PC-3 (cell line): ENCODE measurements at regions of chr5 and their contacts with region 1.

Region 1: GRCh38 chr5:94968507-94969095 is 316.3 kb downstream of the MCTP1 start:
- DNase-seq: peak; percentile 79
- ATAC-seq: peak; percentile 64
- H3K4me3 ChIP-seq: no peak overlapping the region
- H3K27ac ChIP-seq: no peak overlapping the region
- H3K4me1 ChIP-seq: no peaks in the 10 kb centered on the region; the same call in 1 of the 2 replicates
- H3K27me3 ChIP-seq: no peaks in the 10 kb centered on the region
- CTCF ChIP-seq: peak; percentile 71

Region 2: GRCh38 chr5:95081500-95081960 is 112.9 kb after region 1 on chr5:
- CTCF ChIA-PET with region 1: no interaction called
- POLR2A ChIA-PET with region 1: no interaction called
- intact Hi-C with region 1: loop called (anchors 2 kb)
- DNase-seq: peak; percentile 83
- ATAC-seq: peak; percentile 79
- H3K4me3 ChIP-seq: peak overlapping the region; percentile 77
- H3K27ac ChIP-seq: peak overlapping the region; percentile 82
- H3K4me1 ChIP-seq: peaks cover 35% of the 10 kb centered on the region
- H3K27me3 ChIP-seq: no peaks in the 10 kb centered on the region
- CTCF ChIP-seq: no peak

Region 3: GRCh38 chr5:95238560-95239325 is 270.1 kb after region 1 on chr5:
- CTCF ChIA-PET with region 1: no interaction called
- POLR2A ChIA-PET with region 1: no interaction called
- intact Hi-C with region 1: loop called (anchors 1 kb)
- DNase-seq: peak; percentile 54
- ATAC-seq: peak; percentile 83
- H3K4me3 ChIP-seq: no peak overlapping the region
- H3K27ac ChIP-seq: no peak overlapping the region
- H3K4me1 ChIP-seq: 0 out of 2 replicates have a peak, but pooled peaks cover 4% of the 10 kb centered on the region
- H3K27me3 ChIP-seq: no peaks in the 10 kb centered on the region
- CTCF ChIP-seq: peak; percentile 59

Region 4: GRCh38 chr5:95261437-95262175 is 293.0 kb after region 1 on chr5:
- CTCF ChIA-PET with region 1: no interaction called
- POLR2A ChIA-PET with region 1: no interaction called
- intact Hi-C with region 1: loop called (anchors 1 kb)
- DNase-seq: peak; percentile 50
- ATAC-seq: peak; percentile 55
- H3K4me3 ChIP-seq: no peak overlapping the region
- H3K27ac ChIP-seq: no peak overlapping the region
- H3K4me1 ChIP-seq: no peaks in the 10 kb centered on the region
- H3K27me3 ChIP-seq: peaks cover 5% of the 10 kb centered on the region; the same call in 1 of the 2 replicates
- CTCF ChIP-seq: peak; percentile 63